CD4-positive, alpha-beta T cell (primary cell): ENCODE measurements at regions of chr16 and their contacts with region 1.

Region 1: GRCh38 chr16:667780-668518 is at the start of gene RHOT2:
- DNase-seq: peak; percentile 80 to 96 (median 92)
- ATAC-seq: peak; percentile 92
- H3K4me3 ChIP-seq: peak within 1 kb of the TSS; percentile 63
- H3K4me3 Mint-ChIP-seq: peak within 1 kb of the TSS; percentile 83
- H3K27ac ChIP-seq: peak within 1 kb of the TSS; percentile 28 to 56
- H3K27ac Mint-ChIP-seq: peak within 1 kb of the TSS; percentile 75
- H3K4me1 ChIP-seq: peaks cover 30% of the 10 kb centered on the region
- H3K4me1 Mint-ChIP-seq: peaks cover 6% of the 10 kb centered on the region
- H3K27me3 ChIP-seq: no peaks in the 10 kb centered on the region
- H3K27me3 Mint-ChIP-seq: no peaks in the 10 kb centered on the region
- CTCF ChIP-seq: peak; percentile 67
- total RNA-seq, gene RHOT2: 202 to 209 TPM

Region 2: GRCh38 chr16:578870-579405 is 89.0 kb before region 1 on chr16:
- CTCF ChIA-PET with region 1: no interaction called
- POLR2A ChIA-PET with region 1: no interaction called
- intact Hi-C with region 1: no loop called
- DNase-seq: peak; percentile 32 to 86 (median 57)
- ATAC-seq: peak; percentile 95
- H3K4me3 ChIP-seq: no peak overlapping the region
- H3K4me3 Mint-ChIP-seq: no peak overlapping the region
- H3K27ac ChIP-seq: no peak overlapping the region
- H3K27ac Mint-ChIP-seq: no peak overlapping the region
- H3K4me1 ChIP-seq: peaks cover 4% of the 10 kb centered on the region
- H3K4me1 Mint-ChIP-seq: no peaks in the 10 kb centered on the region
- H3K27me3 ChIP-seq: no peaks in the 10 kb centered on the region
- H3K27me3 Mint-ChIP-seq: no peaks in the 10 kb centered on the region
- CTCF ChIP-seq: peak; percentile 71

Region 3: GRCh38 chr16:684067-684794 is 16.3 kb after region 1 on chr16 and contains the start of gene JMJD8:
- CTCF ChIA-PET with region 1: interaction called, 5 read pairs
- POLR2A ChIA-PET with region 1: interaction called, 12 read pairs
- intact Hi-C with region 1: no loop called
- DNase-seq: peak; percentile 90 to 99 (median 96)
- ATAC-seq: peak; percentile 59
- H3K4me3 ChIP-seq: peak within 1 kb of the TSS; percentile 63
- H3K4me3 Mint-ChIP-seq: peak within 1 kb of the TSS; percentile 83
- H3K27ac ChIP-seq: peak within 1 kb of the TSS; percentile 62 to 70
- H3K27ac Mint-ChIP-seq: peak within 1 kb of the TSS; percentile 42
- H3K4me1 ChIP-seq: peaks cover 69% of the 10 kb centered on the region
- H3K4me1 Mint-ChIP-seq: peaks cover 9% of the 10 kb centered on the region
- H3K27me3 ChIP-seq: no peaks in the 10 kb centered on the region
- H3K27me3 Mint-ChIP-seq: no peaks in the 10 kb centered on the region
- CTCF ChIP-seq: no peak
- total RNA-seq, gene JMJD8: 22.0 to 23.6 TPM